Activated CD4-positive, alpha-beta memory T cell treated with anti-CD3 and anti-CD28 coated beads for 36 hours (primary cell): ENCODE measurements at regions of chr3 and their contacts with region 1.

Region 1: GRCh38 chr3:195542698-195543499 is at the start of gene PPP1R2:
- DNase-seq: peak; percentile 93
- H3K4me3 Mint-ChIP-seq: peak within 1 kb of the TSS; percentile 90
- H3K27ac Mint-ChIP-seq: peak within 1 kb of the TSS; percentile 91
- H3K4me1 Mint-ChIP-seq: peaks cover 59% of the 10 kb centered on the region
- H3K27me3 Mint-ChIP-seq: no peaks in the 10 kb centered on the region
- total RNA-seq, gene PPP1R2: 101 to 105 TPM

Region 2: DNA sequence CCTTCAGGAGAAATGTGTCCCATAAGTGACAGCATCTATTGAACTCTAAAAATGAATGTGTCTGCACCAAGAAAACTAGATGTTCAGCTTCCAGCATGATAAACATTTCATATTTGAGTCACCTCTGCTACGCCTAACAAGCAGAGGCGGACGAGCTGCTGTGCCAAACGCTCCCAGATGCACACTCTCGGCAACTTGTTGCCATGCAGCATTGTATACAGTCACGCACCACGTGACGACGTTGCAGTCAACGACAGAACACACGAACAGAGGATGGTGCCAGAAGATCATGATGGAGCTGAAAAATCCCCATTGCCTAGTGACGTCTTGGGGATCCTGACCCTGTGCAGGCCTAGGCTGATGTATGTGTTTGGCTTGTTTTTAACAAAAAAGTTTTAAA is 409.4 kb before region 1 on chr3:
- CTCF ChIA-PET with region 1: no interaction called
- POLR2A ChIA-PET with region 1: no interaction called
- intact Hi-C with region 1: loop called (anchors 5 kb)
- DNase-seq: peak; percentile 90
- H3K4me3 Mint-ChIP-seq: no peak overlapping the region
- H3K27ac Mint-ChIP-seq: peak overlapping the region; percentile 61
- H3K4me1 Mint-ChIP-seq: peaks cover 44% of the 10 kb centered on the region
- H3K27me3 Mint-ChIP-seq: no peaks in the 10 kb centered on the region

Region 3: DNA sequence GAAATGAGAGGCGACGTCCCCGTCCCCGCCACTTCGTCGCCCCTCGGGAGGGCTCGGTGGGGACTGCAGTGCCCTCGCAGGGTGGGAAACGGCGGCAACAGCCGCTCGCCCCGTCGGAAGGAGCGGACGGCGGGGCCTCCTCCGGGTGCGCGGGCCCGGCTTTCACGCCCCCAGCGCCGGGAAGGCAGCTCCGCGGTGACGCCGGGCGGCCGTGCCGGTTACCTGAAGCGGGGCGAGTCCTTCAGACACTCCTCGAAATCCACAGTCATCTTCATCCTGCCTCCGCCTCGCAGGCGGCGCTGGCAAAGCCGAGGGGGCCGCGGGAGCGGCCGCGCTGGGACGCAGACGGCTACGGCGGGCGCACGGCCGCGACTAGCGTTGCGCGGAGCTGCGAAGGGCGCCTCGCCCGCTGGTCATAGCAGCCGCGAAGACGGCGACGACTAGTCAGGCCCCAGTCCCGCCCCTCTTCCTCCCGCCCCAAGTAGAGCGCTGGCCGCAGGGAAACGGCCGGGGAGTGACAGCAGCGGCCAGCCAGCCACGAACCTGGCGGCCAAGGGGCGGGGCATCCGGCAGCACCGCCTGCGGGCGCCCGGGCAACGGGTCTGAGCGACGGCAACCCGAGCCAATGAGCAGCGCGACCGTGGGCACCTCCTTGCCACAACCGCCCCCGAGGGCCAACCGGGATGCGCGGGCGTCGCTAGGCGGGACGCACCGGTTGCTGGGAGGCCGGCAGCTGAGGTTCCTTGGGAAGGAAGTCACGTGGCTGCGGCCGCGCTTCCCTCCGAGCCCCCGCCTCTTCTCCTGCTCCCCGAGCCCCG is 100.1 kb before region 1 on chr3 and contains the start of gene ACAP2:
- CTCF ChIA-PET with region 1: no interaction called
- POLR2A ChIA-PET with region 1: no interaction called
- intact Hi-C with region 1: loop called (anchors 2 kb)
- DNase-seq: peak; percentile 99
- H3K4me3 Mint-ChIP-seq: peak within 1 kb of the TSS; percentile 92
- H3K27ac Mint-ChIP-seq: peak within 1 kb of the TSS; percentile 91
- H3K4me1 Mint-ChIP-seq: peaks cover 39% of the 10 kb centered on the region
- H3K27me3 Mint-ChIP-seq: no peaks in the 10 kb centered on the region
- total RNA-seq, gene ACAP2: 45.0 to 47.0 TPM

Region 4: DNA sequence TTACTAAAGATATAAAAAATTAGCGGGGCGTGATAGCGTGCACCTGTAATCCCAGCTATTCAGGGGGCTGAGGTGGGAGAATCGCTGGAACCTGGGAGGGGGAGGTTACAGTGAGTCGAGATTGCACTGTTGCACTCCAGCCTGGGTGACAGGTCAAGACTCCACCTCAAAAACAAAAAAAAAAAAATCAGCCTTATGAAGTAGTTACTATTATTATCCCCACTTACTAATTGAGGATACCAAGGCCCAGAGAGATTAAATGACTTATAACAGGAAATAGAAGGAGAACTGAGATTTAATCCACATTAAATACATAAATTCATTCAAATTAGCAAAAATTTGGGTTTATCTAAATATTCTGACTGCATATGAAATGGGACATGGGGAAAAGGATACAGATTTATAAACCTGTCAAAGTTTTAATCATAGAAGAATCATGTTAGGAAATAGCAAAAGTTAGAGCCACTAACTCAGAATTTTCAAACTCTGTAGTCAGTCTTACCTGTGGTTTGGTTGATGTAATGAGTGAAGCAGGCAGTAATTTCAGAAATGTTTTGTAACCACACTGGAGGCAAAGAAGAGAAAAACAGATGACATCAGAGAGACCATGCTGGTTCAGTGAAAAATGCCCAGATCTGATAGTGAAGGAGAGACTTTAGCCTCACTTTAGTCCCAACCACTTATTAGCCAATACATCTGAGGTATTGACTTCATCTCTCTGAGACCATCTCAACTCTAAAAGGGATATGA is 75.1 kb before region 1 on chr3:
- CTCF ChIA-PET with region 1: no interaction called
- POLR2A ChIA-PET with region 1: no interaction called
- intact Hi-C with region 1: no loop called
- DNase-seq: no peak
- H3K4me3 Mint-ChIP-seq: no peak overlapping the region
- H3K27ac Mint-ChIP-seq: peak overlapping the region; percentile 66
- H3K4me1 Mint-ChIP-seq: peaks cover 14% of the 10 kb centered on the region
- H3K27me3 Mint-ChIP-seq: no peaks in the 10 kb centered on the region

Region 5: GRCh38 chr3:195532834-195533233 is 10.1 kb before region 1 on chr3:
- CTCF ChIA-PET with region 1: interaction called, 10 read pairs
- POLR2A ChIA-PET with region 1: interaction called, 7 read pairs
- intact Hi-C with region 1: no loop called
- DNase-seq: no peak
- H3K4me3 Mint-ChIP-seq: no peak overlapping the region
- H3K27ac Mint-ChIP-seq: peak overlapping the region; percentile 7
- H3K4me1 Mint-ChIP-seq: peaks cover 72% of the 10 kb centered on the region
- H3K27me3 Mint-ChIP-seq: no peaks in the 10 kb centered on the region

Region 6: GRCh38 chr3:195774917-195775316 is 232.0 kb after region 1 on chr3:
- CTCF ChIA-PET with region 1: no interaction called
- POLR2A ChIA-PET with region 1: no interaction called
- intact Hi-C with region 1: no loop called
- DNase-seq: peak; percentile 59
- H3K4me3 Mint-ChIP-seq: no peak overlapping the region
- H3K27ac Mint-ChIP-seq: no peak overlapping the region
- H3K4me1 Mint-ChIP-seq: peaks cover 10% of the 10 kb centered on the region
- H3K27me3 Mint-ChIP-seq: no peaks in the 10 kb centered on the region

Region 7: DNA sequence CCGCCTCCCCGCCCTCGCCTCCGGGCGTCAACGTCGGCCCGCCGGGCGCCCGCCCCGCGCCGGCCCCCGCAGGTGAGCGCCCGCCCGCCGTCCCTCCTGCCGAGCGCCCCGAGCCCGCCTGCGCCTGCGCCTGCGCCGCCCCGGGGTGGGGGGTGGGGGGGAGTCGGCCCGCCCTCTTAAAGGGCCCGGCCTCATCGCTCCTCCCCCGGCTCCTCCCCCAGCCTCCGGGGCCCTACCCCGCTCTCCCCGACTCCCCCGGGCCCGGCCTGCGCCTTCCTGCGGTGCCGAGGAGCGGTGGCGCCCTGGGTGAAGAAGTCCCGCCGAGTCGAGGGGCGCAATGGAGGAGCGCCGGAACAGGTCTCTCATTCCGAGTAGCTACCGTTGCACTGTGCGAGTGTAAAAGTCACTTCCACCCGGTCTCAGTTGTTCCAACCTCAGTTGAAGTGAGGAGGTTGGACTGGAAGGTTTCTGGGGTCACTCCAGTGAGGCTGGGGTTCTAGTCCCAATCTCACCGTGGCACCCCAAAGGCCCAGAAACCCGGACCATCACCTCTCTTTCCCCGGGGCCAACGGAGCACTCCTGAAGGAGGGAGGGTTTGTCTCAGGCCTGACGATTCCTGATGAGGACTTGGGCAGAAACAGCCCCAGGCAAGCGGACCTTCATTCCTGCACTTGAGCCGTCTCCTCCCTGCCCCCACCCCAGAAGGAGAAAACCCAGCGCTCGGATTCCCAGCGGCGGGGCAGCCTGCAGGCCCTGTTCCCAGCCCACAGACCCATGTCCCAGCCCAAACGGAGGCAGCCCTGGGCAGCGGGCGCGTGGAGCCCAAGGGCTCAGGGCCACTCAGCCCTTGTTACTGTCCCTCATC is 367.0 kb after region 1 on chr3:
- CTCF ChIA-PET with region 1: no interaction called
- POLR2A ChIA-PET with region 1: no interaction called
- intact Hi-C with region 1: loop called (anchors 2 kb)
- DNase-seq: peak; percentile 91
- H3K4me3 Mint-ChIP-seq: peak overlapping the region; percentile 66
- H3K27ac Mint-ChIP-seq: peak overlapping the region; percentile 54
- H3K4me1 Mint-ChIP-seq: peaks cover 28% of the 10 kb centered on the region
- H3K27me3 Mint-ChIP-seq: no peaks in the 10 kb centered on the region